Gastrocnemius medialis (tissue), 4 donors: ENCODE measurements at regions of chr7 and their contacts with region 1.

Region 1: DNA sequence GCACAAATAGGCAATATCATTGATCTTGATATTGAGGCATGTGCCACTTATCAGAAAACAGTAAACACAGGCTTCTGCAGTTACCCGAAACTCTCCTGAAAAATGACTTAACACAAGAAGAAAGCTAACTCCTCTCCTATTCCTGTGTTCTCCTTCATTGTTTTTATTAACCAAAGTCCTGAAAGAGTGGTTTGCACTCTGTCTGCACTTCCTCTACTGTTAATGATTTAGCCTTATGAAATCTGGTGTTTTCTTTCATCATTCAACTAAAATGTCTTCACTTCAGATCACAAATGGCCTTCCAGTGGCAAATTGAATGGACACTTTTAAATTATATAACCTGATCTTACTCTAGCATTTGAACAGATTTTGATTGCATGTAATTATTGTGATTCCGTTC is 630.6 kb upstream of the PHF14 start:
- DNase-seq: no peak
- ATAC-seq: no peak
- H3K4me3 ChIP-seq: no peak overlapping the region
- H3K27ac ChIP-seq: no peak overlapping the region
- H3K4me1 ChIP-seq: no peaks in the 10 kb centered on the region
- H3K27me3 ChIP-seq: no peaks in the 10 kb centered on the region
- CTCF ChIP-seq: no peak
- POLR2A ChIP-seq: no peak

Region 2: DNA sequence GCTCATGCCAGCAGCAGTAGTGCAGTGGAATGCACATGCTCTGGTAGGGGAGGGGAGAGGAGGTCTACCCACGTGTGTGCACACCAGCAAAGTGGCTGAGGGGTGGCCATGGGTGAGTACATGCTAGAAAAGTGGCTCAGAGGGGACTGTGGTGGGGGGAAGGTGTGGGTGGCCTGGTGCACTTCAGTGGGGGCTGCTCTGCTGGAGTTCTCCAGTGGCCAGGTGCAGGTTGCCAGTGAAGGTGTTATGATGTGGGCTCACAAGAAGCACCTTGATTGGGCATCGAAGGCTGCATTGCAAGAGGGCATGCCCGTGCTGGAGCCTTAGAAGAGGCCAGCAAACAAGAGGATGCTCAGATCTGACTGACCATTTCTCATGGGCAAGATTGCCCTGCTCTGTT is 16.9 kb after region 1 on chr7:
- in situ Hi-C with region 1: no loop called
- intact Hi-C with region 1: loop called (anchors 1 kb)
- DNase-seq: no peak
- ATAC-seq: no peak
- H3K4me3 ChIP-seq: no peak overlapping the region
- H3K27ac ChIP-seq: no peak overlapping the region
- H3K4me1 ChIP-seq: no peaks in the 10 kb centered on the region
- H3K27me3 ChIP-seq: no peaks in the 10 kb centered on the region
- CTCF ChIP-seq: no peak
- POLR2A ChIP-seq: no peak